ENCODE measurements at regions of chr6 and their contacts with region 1.

Region 1: DNA sequence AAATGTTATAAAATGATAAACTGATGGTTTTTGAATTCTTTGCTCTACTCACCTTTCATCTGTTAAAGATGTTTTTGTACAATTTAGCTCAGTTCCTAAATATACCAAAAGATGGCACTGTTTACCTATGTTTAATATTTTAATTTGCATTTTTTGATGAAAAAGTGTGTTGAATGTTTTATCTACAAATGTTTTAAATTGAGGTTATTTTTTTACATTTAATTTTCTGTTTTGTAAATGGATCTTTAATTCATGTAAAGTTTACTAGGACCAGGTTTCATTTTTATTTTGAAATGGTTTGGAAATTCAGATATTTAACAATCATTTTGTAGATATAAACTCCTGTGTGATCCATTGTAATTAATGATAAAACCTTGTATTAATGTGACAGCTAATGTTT is 30.0 kb downstream of the CDKAL1 start:
- DNase-seq: no peak
- ATAC-seq: no peak
- H3K4me3 Mint-ChIP-seq: no peak overlapping the region
- H3K27ac Mint-ChIP-seq: no peak overlapping the region
- H3K4me1 Mint-ChIP-seq: peaks cover 14% of the 10 kb centered on the region
- H3K27me3 Mint-ChIP-seq: no peaks in the 10 kb centered on the region

Region 2: DNA sequence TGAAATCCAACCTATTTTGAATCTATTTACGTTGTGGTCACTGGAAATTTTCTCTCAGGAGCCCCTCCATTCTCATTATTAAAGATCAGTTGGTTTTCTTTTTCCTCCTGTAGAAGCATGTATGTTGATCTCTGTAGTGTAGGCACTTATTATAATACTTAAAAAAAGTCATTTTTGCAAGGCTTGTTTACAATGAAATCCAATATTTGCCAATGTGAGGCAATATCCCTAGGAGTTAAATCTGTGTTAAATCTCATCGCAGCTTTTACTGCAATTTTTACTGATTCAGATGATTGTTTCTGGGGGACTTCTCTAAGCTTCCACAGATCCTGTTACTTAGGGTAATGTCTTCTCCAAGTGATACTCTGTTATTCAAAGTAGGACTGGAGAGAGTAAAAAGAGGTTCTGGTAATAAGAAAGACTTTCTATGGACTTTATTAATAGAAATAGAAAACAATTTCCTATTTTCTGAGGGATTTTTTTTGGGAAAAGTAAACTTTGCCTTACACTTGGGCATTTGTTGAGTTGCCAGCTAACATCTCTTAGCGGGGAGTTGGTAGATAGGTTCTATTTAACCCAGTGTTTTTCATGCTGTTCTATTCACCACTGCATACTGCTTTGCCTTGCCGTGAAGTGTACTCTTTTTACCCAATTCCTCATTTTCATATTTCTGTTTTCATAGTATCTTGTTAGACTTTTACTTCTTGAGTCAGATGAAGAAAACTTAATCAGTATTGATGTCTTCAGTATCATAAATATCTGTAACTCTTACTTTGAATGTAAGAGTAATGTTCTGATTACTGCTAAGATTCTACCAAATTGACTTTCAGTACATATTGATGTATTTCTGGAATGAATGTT is 18.5 kb after region 1 on chr6:
- CTCF ChIA-PET with region 1: no interaction called
- DNase-seq: no peak
- ATAC-seq: no peak
- H3K4me3 Mint-ChIP-seq: no peak overlapping the region
- H3K27ac Mint-ChIP-seq: no peak overlapping the region
- H3K4me1 Mint-ChIP-seq: peaks cover 11% of the 10 kb centered on the region
- H3K27me3 Mint-ChIP-seq: no peaks in the 10 kb centered on the region

Region 3: DNA sequence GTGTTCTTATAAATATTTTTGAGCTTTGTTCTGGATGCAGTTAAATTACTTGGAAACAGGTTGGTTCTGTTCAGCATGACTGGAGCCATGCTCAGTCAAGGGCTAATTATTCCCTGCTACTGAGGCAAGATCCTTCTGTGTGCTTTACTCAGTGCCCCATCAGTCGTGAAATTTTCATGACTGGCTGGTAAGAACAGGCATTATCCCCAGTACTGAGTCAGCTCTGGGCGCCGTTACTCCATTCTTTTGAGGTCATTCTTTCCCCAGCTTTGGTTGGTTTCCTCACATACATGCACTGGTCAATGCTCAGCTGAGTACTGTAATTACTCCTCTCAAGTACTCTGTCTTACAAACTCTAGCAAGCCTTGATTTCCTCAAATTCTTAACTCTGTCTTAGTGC is 41.3 kb after region 1 on chr6:
- CTCF ChIA-PET with region 1: no interaction called
- DNase-seq: no peak
- ATAC-seq: no peak
- H3K4me3 Mint-ChIP-seq: no peak overlapping the region
- H3K27ac Mint-ChIP-seq: no peak overlapping the region
- H3K4me1 Mint-ChIP-seq: no peaks in the 10 kb centered on the region
- H3K27me3 Mint-ChIP-seq: no peaks in the 10 kb centered on the region

Region 4: GRCh38 chr6:21593412-21593926 is 1029.2 kb after region 1 on chr6 and contains the start of gene SOX4:
- CTCF ChIA-PET with region 1: interaction called, 59 read pairs
- DNase-seq: peak; percentile 77
- ATAC-seq: peak; percentile 60
- H3K4me3 Mint-ChIP-seq: peak within 1 kb of the TSS; percentile 73
- H3K27ac Mint-ChIP-seq: peak within 1 kb of the TSS; percentile 61
- H3K4me1 Mint-ChIP-seq: peaks cover 19% of the 10 kb centered on the region
- H3K27me3 Mint-ChIP-seq: peaks cover 53% of the 10 kb centered on the region
- total RNA-seq, gene SOX4: 0.76 to 10.4 TPM

Measured in activated CD8-positive, alpha-beta memory T cell treated with anti-CD3 and anti-CD28 coated beads, Interleukin-2, amount 10 ng/mL, durations not matched to agents 7 days and 5 days (primary cell).